ENCODE measurements at regions of chr22 and their contacts with region 1.

Region 1: DNA sequence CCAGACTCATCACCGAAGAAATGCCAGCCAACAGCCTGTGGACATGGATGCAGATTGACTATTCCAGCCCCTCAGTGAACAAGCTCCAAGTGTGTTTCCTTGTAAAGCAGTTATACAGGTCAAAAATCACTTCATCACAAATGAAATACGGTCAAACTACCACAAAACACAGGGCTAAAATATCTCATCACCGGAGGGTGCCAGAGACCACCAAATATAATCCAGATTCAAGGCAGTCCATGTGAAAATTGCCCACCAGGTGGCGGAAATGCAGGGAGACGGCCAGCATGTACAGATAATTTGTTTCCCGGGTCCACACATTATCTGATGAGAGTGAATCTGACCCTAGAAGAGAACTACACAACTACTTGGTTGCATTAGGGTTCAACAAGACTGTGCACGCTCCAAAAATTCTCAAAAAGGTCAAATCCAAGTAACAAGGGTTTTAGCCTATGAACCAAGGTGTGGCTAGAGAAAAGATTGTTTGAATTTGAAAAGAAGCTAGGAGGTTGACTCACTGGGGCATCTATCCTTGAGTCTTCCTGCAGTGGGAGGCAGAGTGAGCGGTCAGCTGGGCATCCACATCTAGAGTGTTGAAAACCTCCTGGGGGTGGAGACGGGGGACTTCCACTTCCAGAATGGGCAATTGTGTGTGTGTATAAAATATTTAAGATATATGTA is 71.7 kb downstream of the IGLL5 start:
- DNase-seq: peak; percentile 64 to 97 (median 88)

Region 2: DNA sequence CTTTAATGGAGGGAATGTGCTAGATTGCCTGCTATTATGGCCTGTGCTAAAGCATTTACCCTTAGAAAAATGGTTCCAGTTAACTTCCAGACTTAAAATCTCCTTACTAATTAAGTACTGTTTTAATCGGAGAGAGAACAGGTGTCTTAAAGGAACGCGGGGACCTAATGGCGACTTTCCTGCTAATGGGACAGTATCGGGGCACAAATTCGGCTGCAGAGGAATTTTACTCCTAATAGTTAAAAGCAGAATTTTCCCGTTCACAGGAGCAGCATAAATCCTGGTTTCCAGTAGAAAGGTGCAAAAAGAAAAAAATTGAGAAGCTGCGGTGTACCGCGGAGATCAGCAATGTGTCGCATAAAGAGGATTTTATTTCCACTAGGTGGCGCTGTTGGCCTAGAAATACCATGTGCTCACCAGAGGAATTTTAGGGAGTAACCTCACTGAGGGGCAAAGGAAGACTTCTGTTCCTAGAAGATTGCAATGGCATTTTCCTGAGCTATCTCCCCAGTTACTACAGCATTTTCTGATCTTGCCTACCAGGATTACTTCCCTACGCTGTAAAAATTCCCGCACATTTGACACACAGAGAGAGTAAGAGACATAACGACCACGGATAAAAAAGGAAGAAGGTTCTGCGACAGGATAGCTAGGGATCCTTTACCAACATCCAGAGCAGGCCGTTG is 495.3 kb before region 1 on chr22:
- intact Hi-C with region 1: loop called (anchors 1 kb)
- DNase-seq: peak in 5 of 10 donors; percentile 16 to 66 (median 56)

Region 3: GRCh38 chr22:22587577-22588188 is 371.6 kb before region 1 on chr22:
- intact Hi-C with region 1: loop called (anchors 2 kb)
- DNase-seq: no peak

Region 4: DNA sequence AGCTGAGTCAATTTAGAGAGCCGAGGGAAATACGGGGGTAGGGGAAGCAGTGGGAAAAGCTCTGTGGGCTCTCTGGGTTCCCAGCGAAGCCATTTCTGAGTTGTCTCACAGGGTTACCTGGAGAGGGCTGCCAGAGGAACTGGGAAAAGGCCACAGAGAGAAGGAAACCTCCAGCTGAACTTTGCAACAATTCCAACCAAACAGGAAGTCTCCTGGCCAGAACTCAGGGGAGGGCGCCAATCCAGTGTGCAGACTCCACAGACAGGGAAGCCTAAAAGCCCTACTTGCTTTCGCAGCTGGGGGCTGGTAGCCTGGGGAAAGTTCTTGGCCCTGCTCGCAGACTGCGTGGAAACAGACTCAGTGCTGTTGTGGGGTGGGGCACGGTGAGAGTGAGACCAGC is 88.0 kb after region 1 on chr22:
- intact Hi-C with region 1: loop called (anchors 10 kb)
- DNase-seq: peak in 1 of 10 donors; percentile 36

Region 5: GRCh38 chr22:23289851-23290724 is 330.8 kb after region 1 on chr22:
- intact Hi-C with region 1: loop called (anchors 2 kb)
- DNase-seq: peak in 9 of 10 donors; percentile 45 to 92 (median 58)

Measured in posterior cingulate gyrus (tissue), 11 donors.